H1 (cell line): ENCODE measurements at regions of chr11 and their contacts with region 1.

Region 1: GRCh38 chr11:130861902-130862860 is 54.1 kb downstream of the SNX19 start:
- DNase-seq: peak; percentile 91 to 94
- H3K4me3 ChIP-seq: no peak overlapping the region
- H3K27ac ChIP-seq: no peak overlapping the region
- H3K4me1 ChIP-seq: peaks cover 0 to 7% (median 2%) of the 10 kb centered on the region in 4 experiments; a peak in 4 of 7 replicates
- H3K27me3 ChIP-seq: peaks cover 0 to 9% (median 2%) of the 10 kb centered on the region in 4 experiments; a peak in 3 of 7 replicates
- CTCF ChIP-seq: peak; percentile 93 to 100 (median 99)
- EP300 ChIP-seq: no peak
- POLR2A ChIP-seq: no peak
- RAD21 ChIP-seq: peak; percentile 100

Region 2: GRCh38 chr11:130427581-130428315 is 434.4 kb before region 1 on chr11:
- CTCF ChIA-PET with region 1: interaction called, 521 read pairs
- POLR2A ChIA-PET with region 1: interaction called, 5 read pairs
- DNase-seq: peak in 1 of 2 experiments; percentile 80
- H3K4me3 ChIP-seq: peak overlapping the region; percentile 40 to 71 (median 44)
- H3K27ac ChIP-seq: no peak overlapping the region
- H3K4me1 ChIP-seq: peaks cover 0 to 13% (median 9%) of the 10 kb centered on the region in 4 experiments; a peak in 6 of 7 replicates
- H3K27me3 ChIP-seq: peaks cover 2 to 38% (median 37%) of the 10 kb centered on the region in 4 experiments
- CTCF ChIP-seq: peak in 2 of 3 experiments; percentile 26 to 59; a peak in 2 of 4 replicates
- EP300 ChIP-seq: no peak
- POLR2A ChIP-seq: no peak
- RAD21 ChIP-seq: peak; percentile 44 to 60

Region 3: DNA sequence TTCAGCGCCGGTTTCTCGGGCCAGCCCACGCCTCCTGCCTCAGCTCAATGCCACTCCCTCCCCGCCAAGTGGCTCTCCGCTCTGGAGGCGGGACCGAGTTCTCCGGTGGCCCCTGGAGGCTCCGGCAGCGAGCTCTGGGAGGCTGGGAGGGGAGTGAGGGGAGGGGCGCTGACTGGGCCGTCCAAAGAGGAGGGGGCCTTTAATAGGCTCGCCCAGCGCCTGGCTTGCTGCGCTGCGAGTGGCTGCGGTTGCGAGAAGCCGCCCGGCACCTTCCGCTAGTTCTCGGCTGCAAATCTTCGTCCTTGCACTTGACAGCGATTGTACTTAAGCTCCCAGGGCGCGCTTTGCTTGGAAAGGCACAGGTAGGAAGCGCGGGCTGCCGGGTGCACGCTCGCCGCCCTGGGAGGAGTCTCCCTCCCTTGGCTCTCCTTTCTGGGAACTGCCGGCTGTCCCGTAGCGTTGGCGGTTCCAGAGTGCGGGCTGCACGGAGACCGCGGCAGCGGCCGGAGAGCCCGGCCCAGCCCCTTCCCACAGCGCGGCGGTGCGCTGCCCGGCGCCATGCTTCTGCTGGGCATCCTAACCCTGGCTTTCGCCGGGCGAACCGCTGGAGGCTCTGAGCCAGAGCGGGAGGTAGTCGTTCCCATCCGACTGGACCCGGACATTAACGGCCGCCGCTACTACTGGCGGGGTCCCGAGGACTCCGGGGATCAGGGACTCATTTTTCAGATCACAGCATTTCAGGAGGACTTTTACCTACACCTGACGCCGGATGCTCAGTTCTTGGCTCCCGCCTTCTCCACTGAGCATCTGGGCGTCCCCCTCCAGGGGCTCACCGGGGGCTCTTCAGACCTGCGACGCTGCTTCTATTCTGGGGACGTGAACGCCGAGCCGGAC is 413.5 kb before region 1 on chr11 and contains the start of gene ADAMTS15:
- CTCF ChIA-PET with region 1: interaction called, 521 read pairs
- POLR2A ChIA-PET with region 1: interaction called, 4 read pairs
- DNase-seq: peak; percentile 80 to 87
- H3K4me3 ChIP-seq: peak within 1 kb of the TSS; percentile 49 to 72 (median 54)
- H3K27ac ChIP-seq: no peak within 1 kb of the TSS
- H3K4me1 ChIP-seq: peaks cover 0 to 9% (median 6%) of the 10 kb centered on the region in 4 experiments; a peak in 6 of 7 replicates
- H3K27me3 ChIP-seq: peaks cover 9 to 63% (median 44%) of the 10 kb centered on the region in 4 experiments
- CTCF ChIP-seq: no peak; a peak in 1 of 4 replicates
- EP300 ChIP-seq: no peak
- POLR2A ChIP-seq: peak in 1 of 2 experiments; percentile 34; a peak in 1 of 3 replicates
- RAD21 ChIP-seq: no peak
- total RNA-seq, gene ADAMTS15: 4.7 and 4.9 TPM in 2 replicates

Region 4: DNA sequence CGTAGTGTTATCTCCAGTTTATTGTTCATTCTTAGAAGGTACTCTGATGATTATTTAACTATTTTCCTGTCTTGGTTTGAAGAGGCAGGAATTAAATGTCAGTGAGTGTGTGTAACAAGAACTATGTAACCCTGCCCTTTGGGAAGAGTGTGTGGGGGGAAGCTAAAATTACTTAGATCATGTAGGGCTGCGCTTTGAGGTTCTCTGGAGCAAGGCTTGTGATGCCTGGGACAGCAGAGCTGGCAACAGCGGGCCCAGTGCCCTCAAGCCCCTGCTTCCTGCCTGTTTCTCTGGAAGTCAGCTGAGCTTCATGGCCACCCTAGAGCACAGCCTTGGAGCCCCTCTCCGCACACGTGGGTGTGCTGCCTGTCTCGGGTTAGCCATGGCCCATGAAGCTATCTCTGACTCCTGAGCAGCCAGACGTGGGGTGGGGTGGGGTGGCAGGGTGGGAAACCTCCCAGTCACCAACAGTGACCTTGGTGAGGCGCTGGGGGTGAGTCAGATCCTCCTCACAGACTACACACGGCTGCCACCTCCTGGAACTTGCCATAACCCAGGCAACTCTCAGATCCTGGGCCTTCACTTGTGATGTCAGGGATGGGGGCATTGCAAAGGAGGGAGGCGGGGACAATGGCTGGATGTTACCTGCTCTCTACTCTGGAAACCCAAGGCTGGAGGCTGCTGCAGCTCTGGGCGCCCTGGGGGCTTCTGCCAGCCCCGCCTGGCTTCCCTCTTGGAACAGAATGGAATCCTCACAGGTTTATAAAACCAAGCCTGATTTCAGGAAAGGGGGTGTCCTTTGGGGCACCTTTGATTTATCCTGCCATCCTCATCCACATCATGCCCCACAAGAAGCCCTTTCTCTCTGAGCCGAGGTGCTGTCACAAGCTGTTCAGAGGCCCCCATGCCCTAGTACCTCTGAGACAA is 34.5 kb before region 1 on chr11:
- CTCF ChIA-PET with region 1: interaction called, 65 read pairs
- POLR2A ChIA-PET with region 1: no interaction called
- DNase-seq: peak; percentile 66 to 69
- H3K4me3 ChIP-seq: no peak overlapping the region
- H3K27ac ChIP-seq: no peak overlapping the region
- H3K4me1 ChIP-seq: peaks cover 0 to 10% (median 2%) of the 10 kb centered on the region in 4 experiments; a peak in 4 of 7 replicates
- H3K27me3 ChIP-seq: no peaks in the 10 kb centered on the region
- CTCF ChIP-seq: peak; percentile 73 to 85 (median 79)
- EP300 ChIP-seq: no peak
- POLR2A ChIP-seq: no peak
- RAD21 ChIP-seq: peak; percentile 91 to 93

Region 5: DNA sequence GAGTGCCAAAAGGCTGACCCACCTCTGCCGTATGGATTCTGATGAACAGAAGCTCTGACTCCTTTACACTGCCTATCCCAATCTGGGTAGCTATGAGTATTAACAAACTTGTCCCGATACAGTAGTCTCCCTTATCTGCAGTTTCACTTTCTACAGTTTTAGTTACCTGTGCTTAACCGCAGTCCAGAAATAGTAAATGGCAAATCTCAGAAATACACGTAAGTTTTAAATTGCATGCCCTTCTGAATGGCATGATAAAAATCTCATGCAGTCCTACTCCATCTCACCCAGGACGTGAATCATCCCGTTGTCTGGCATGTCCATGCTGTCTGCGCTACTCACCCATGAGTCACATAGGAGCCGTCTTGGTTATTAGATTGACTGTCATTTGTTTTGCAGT is 14.7 kb before region 1 on chr11:
- CTCF ChIA-PET with region 1: interaction called, 34 read pairs
- POLR2A ChIA-PET with region 1: no interaction called
- DNase-seq: no peak
- H3K4me3 ChIP-seq: no peak overlapping the region
- H3K27ac ChIP-seq: no peak overlapping the region
- H3K4me1 ChIP-seq: peaks cover 0 to 3% (median 0%) of the 10 kb centered on the region in 4 experiments; a peak in 2 of 7 replicates
- H3K27me3 ChIP-seq: peaks cover 0 to 1% (median 0%) of the 10 kb centered on the region in 4 experiments; a peak in 2 of 7 replicates
- CTCF ChIP-seq: no peak
- EP300 ChIP-seq: no peak
- POLR2A ChIP-seq: no peak
- RAD21 ChIP-seq: no peak

Region 6: DNA sequence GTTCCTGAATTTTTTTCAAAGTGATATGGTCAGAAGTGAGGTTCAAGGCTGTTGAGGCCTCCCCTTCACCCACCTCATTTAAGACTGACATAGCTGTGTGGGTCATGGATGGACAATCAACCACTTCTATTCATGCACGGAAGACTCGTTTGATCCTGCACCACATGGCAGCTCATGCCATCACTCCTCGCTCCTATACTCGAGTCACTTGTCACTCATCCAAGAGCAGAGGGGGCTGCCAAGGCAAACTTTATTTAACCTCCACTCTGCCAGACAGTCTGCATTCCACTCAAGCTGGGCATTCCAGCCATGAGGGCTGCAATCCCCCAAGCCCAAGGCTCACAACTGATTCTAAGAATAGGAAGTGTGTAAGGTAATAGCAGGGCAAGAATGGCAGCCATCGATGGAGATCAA is 20.0 kb after region 1 on chr11:
- CTCF ChIA-PET with region 1: interaction called, 10 read pairs
- POLR2A ChIA-PET with region 1: no interaction called
- DNase-seq: no peak
- H3K4me3 ChIP-seq: no peak overlapping the region
- H3K27ac ChIP-seq: no peak overlapping the region
- H3K4me1 ChIP-seq: no peaks in the 10 kb centered on the region
- H3K27me3 ChIP-seq: no peaks in the 10 kb centered on the region
- CTCF ChIP-seq: no peak
- EP300 ChIP-seq: no peak
- POLR2A ChIP-seq: no peak
- RAD21 ChIP-seq: no peak